HEK293 (cell line): ENCODE measurements at regions of chr17 and their contacts with region 1.

Region 1: DNA sequence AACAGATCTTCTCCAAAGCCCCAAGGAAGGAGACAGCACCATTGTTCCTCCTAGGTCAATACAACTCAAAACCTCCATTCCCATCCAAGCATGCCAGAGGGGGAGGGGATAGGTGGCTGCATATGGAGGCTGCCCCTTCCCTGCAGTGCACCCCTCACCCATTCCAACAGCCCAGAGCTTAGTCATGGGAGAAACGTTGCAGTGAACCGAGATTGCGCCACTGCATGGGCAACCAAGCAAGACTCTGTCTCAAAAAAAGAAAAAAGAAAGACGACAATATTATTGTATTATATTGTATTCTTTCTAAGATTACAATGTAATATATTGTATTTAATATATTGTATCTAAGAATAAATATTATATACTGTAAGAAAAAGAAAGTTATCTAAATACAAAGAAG is 36.4 kb upstream of the CD300E start:
- H3K4me3 ChIP-seq: no peak overlapping the region
- H3K27ac ChIP-seq: no peak overlapping the region
- H3K4me1 ChIP-seq: no peaks in the 10 kb centered on the region
- CTCF ChIP-seq: no peak

Region 2: GRCh38 chr17:74671031-74671771 is 11.3 kb after region 1 on chr17:
- CTCF ChIA-PET with region 1: interaction called, 36 read pairs
- POLR2A ChIA-PET with region 1: no interaction called
- H3K4me3 ChIP-seq: no peak overlapping the region
- H3K27ac ChIP-seq: no peak overlapping the region
- H3K4me1 ChIP-seq: no peaks in the 10 kb centered on the region
- CTCF ChIP-seq: no peak

Region 3: DNA sequence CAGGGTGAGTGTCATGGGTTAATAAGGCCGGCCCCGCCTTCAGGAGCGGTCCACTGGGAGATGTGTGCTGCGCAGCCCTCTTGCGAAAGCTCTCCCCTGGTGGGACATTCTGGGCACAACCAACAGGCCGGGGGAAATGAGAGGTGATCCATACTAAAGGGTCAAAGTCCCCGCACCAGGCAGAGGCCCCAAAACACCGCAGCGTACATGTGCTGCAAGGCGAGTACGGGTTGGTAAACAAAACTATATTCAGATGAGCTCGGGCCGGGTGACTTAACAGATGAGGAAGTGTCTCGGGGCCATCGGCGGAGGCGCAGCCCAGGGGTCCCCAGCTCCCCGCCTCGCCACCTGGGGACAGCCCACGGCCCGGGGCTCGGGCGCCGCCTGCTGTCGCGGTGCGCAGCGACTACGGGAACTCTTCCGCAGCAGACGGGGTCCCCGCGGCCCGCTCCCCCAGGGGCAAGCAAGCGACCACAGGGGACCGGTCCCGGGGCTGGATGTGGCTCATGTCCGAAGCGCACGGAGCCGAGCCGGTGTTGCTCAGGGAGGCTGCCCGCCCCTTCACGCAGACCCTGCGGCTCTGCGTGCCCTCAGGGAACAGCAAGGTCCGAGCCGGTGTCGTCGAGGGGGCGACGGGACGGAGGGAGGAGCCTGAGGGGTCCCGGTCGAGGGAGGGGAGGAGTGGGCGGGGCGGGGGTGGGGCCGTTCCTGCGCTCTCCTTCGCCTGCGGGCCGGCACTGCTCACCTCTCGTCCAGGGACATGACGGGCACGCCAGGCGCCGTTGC is 76.8 kb after region 1 on chr17 and contains the start of gene RAB37:
- CTCF ChIA-PET with region 1: interaction called, 64 read pairs
- POLR2A ChIA-PET with region 1: interaction called, 4 read pairs
- H3K4me3 ChIP-seq: peak within 1 kb of the TSS; percentile 5; the same call in 1 of the 2 replicates
- H3K27ac ChIP-seq: no peak within 1 kb of the TSS
- H3K4me1 ChIP-seq: peaks cover 2% of the 10 kb centered on the region; the same call in 1 of the 2 replicates
- CTCF ChIP-seq: no peak

Region 4: DNA sequence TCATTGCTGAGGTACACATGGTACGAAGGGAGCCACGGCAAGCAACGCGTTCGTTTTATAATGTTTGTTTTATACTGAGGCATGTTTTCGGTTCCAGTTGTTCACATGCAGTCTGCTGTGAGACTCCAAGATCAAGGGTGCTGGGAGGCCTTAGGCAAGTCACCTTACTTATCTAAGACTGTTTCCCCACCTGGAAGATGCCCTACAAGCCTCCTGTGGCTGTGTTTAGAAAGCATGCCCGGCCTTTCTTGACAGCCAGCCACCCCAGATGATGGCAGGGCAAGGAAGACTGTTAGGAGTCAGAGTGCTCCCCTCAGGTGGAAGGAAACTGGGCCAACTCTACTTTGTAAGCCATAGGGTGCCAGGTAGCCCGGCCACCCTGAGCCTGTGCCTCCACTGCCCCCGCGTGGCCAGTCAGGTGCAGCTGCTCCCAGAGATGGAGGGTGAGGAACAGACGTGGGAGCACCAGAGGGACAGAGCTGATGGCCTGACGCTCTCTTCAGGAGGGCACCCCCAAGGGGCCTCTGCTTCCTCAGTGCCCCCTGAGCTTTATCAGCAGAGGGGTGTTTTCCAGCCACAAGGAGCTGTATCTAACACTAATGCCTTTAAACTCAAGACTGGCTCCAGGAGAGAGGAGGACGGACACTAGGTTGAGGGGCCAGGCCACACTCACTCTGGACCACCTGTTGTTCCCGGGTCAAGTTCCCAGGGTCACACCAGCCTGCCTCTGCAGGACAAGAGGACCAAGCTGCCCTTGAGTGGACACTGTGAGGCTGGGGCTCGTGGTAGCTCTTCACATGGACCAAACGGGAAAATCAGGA is 110.8 kb after region 1 on chr17:
- CTCF ChIA-PET with region 1: interaction called, 13 read pairs
- POLR2A ChIA-PET with region 1: no interaction called
- H3K4me3 ChIP-seq: no peak overlapping the region
- H3K27ac ChIP-seq: no peak overlapping the region
- H3K4me1 ChIP-seq: no peaks in the 10 kb centered on the region
- CTCF ChIP-seq: peak; percentile 88

Region 5: GRCh38 chr17:74864866-74865395 is 205.0 kb after region 1 on chr17:
- CTCF ChIA-PET with region 1: interaction called, 21 read pairs
- POLR2A ChIA-PET with region 1: no interaction called
- H3K4me3 ChIP-seq: no peak overlapping the region
- H3K27ac ChIP-seq: no peak overlapping the region
- H3K4me1 ChIP-seq: 0 out of 2 replicates have a peak, but pooled peaks cover 2% of the 10 kb centered on the region
- CTCF ChIP-seq: peak; percentile 85